Motor neuron (in vitro differentiated cells): ENCODE measurements at regions of chr10 and their contacts with region 1.

Region 1: GRCh38 chr10:101214446-101215396 is 14.5 kb downstream of the LBX1 start:
- ATAC-seq: peak; percentile 34 to 78 (median 72)
- H3K4me3 ChIP-seq: peak overlapping the region in 1 of 5 donors; percentile 13
- H3K27ac ChIP-seq: no peak overlapping the region
- H3K4me1 ChIP-seq: peaks cover 9 to 10% of the 10 kb centered on the region in 2 donors

Region 2: GRCh38 chr10:100872034-100872791 is 342.5 kb before region 1 on chr10:
- in situ Hi-C with region 1: no loop called
- ATAC-seq: peak; percentile 55 to 93 (median 70)
- H3K4me3 ChIP-seq: no peak overlapping the region
- H3K27ac ChIP-seq: no peak overlapping the region
- H3K4me1 ChIP-seq: peaks cover 15% of the 10 kb centered on the region in 2 donors

Region 3: GRCh38 chr10:101297901-101298486 is 83.3 kb after region 1 on chr10:
- in situ Hi-C with region 1: loop called in 1 of 9 experiments (anchors 10 kb)
- ATAC-seq: peak; percentile 34 to 88 (median 51)
- H3K4me3 ChIP-seq: no peak overlapping the region
- H3K27ac ChIP-seq: no peak overlapping the region
- H3K4me1 ChIP-seq: peaks cover 27 to 44% of the 10 kb centered on the region in 2 donors

Region 4: GRCh38 chr10:101441541-101442455 is 227.1 kb after region 1 on chr10:
- in situ Hi-C with region 1: loop called in 1 of 9 experiments (anchors 25 kb)
- ATAC-seq: peak; percentile 85 to 95 (median 90)
- H3K4me3 ChIP-seq: no peak overlapping the region
- H3K27ac ChIP-seq: no peak overlapping the region
- H3K4me1 ChIP-seq: peaks cover 19 to 54% of the 10 kb centered on the region in 2 donors

Region 5: GRCh38 chr10:101569838-101570766 is 355.4 kb after region 1 on chr10:
- in situ Hi-C with region 1: loop called (anchors 5 to 25 kb)
- ATAC-seq: peak; percentile 43 to 80 (median 48)
- H3K4me3 ChIP-seq: peak overlapping the region; percentile 29 to 51 (median 37)
- H3K27ac ChIP-seq: peak overlapping the region; percentile 24 to 40
- H3K4me1 ChIP-seq: peaks cover 26 to 41% of the 10 kb centered on the region in 2 donors

Region 6: GRCh38 chr10:101782811-101783735 is 568.4 kb after region 1 on chr10 and contains the start of gene NPM3:
- in situ Hi-C with region 1: loop called in 3 of 9 experiments (anchors 25 kb)
- ATAC-seq: peak; percentile 52 to 90 (median 84)
- H3K4me3 ChIP-seq: peak within 1 kb of the TSS; percentile 51 to 90 (median 78)
- H3K27ac ChIP-seq: peak within 1 kb of the TSS; percentile 49 to 50
- H3K4me1 ChIP-seq: peaks cover 10 to 23% of the 10 kb centered on the region in 2 donors
- total RNA-seq, gene NPM3: 31.1 to 95.4 (median 41.6) TPM

Region 7: GRCh38 chr10:102009801-102010425 is 795.2 kb after region 1 on chr10:
- in situ Hi-C with region 1: loop called in 1 of 9 experiments (anchors 25 kb)
- ATAC-seq: peak; percentile 80 to 99 (median 96)
- H3K4me3 ChIP-seq: no peak overlapping the region
- H3K27ac ChIP-seq: no peak overlapping the region
- H3K4me1 ChIP-seq: no peaks in the 10 kb centered on the region